ENCODE measurements at regions of chr7 and their contacts with region 1.

Region 1: GRCh38 chr7:43108255-43109011 is 4.0 kb upstream of the HECW1 start:
- DNase-seq: peak; percentile 76
- H3K4me3 ChIP-seq: no peak overlapping the region; a peak in 1 of 4 replicates
- H3K27ac ChIP-seq: no peak overlapping the region
- H3K4me1 ChIP-seq: no peaks in the 10 kb centered on the region
- H3K27me3 ChIP-seq: peaks cover 32% of the 10 kb centered on the region
- CTCF ChIP-seq: peak; percentile 95
- EP300 ChIP-seq: no peak
- RAD21 ChIP-seq: peak; percentile 64

Region 2: GRCh38 chr7:43119371-43120075 is 11.1 kb after region 1 on chr7:
- CTCF ChIA-PET with region 1: interaction called, 39 read pairs
- POLR2A ChIA-PET with region 1: no interaction called
- DNase-seq: no peak
- H3K4me3 ChIP-seq: no peak overlapping the region
- H3K27ac ChIP-seq: no peak overlapping the region
- H3K4me1 ChIP-seq: no peaks in the 10 kb centered on the region
- H3K27me3 ChIP-seq: peaks cover 64% of the 10 kb centered on the region
- CTCF ChIP-seq: no peak
- EP300 ChIP-seq: no peak
- RAD21 ChIP-seq: no peak

Region 3: DNA sequence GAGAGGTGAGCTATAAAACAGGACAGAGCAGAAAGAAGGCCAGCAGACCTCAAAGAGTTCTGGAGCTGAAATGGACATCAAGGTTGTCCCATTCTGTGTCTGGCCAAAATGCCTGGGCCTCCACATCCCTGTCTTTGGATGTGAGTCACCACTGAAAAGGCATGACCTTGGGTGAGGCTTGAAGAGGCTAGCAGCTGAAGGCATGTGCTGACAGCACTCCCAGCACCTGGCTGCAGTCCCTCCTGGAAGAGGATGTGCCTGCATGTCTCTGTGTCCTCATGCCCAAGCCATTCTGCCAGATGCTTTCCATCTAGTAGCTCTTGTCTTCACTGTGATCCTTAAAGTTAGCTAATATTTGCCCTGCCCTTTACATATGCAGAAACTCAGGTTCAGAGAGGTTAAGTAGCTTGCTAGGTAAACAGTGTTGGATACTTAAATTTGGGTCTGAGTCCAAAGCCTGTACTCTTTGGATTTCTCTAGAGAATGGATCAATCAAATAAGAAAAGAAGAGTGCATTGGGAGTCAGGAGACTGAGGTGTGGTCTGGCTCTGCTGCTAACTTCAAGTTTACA is 39.8 kb after region 1 on chr7:
- CTCF ChIA-PET with region 1: interaction called, 11 read pairs
- POLR2A ChIA-PET with region 1: no interaction called
- DNase-seq: no peak
- H3K4me3 ChIP-seq: no peak overlapping the region
- H3K27ac ChIP-seq: no peak overlapping the region
- H3K4me1 ChIP-seq: no peaks in the 10 kb centered on the region
- H3K27me3 ChIP-seq: peaks cover 14% of the 10 kb centered on the region; the same call in 1 of the 2 replicates
- CTCF ChIP-seq: no peak
- EP300 ChIP-seq: no peak
- RAD21 ChIP-seq: no peak

Measured in SK-N-SH (cell line).